Prostate gland (tissue), 2 donors: ENCODE measurements at regions of chr15 and their contacts with region 1.

Region 1: DNA sequence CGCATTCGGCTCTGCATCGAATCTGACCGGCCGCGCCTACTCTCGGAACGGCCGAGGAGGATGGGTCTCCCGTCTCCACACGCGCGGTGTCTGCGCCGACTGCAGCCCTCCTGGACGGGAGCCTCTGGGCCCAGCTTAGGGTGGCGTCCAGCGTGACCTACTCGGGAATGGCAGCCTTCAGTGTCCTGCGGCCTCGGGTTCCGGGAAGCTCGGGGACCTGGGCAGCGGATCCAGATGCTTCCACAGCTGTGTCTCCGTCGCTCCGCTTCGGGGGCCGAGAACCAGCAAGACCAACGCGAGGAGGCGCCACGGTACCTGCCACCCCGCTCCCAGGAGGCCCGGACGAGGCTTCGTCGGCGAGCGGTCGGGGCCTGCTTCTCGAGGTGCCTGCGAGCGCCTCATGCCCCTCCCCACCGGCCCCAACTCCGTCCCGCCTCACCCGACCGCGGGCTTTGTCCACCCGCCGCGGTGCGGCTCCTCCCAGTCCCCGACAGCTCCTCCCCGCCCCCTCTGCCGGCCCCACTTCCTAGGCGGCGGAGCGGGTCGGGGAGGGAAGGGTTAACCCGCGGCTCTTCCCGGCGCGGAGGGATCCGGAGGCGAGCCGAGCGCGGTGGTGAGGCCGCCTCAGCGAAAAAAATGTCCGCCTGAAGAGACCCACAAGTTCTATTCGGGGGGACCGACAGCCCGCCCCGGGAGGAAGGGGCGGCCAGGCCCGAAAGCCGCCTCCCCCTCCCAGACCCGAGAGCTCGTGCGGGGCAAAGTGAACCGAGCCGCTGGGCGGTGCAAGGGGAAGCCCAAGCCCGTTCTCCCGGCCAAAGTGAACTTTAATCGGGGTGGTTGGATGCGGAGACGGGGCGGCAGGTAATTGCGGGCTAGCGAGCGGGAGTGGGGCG is at the start of gene TCF12:
- DNase-seq: peak; percentile 90
- H3K4me3 ChIP-seq: peak within 1 kb of the TSS; percentile 86 to 98
- H3K27ac ChIP-seq: peak within 1 kb of the TSS; percentile 92 to 96
- H3K4me1 ChIP-seq: peaks cover 6% of the 10 kb centered on the region
- H3K27me3 ChIP-seq: no peaks in the 10 kb centered on the region
- CTCF ChIP-seq: peak; percentile 30 to 62 (median 50)
- POLR2A ChIP-seq: peak; percentile 63
- total RNA-seq, gene TCF12: 95.4 to 123 TPM

Region 2: GRCh38 chr15:56672721-56673120 is 245.6 kb before region 1 on chr15:
- intact Hi-C with region 1: no loop called
- DNase-seq: no peak
- H3K4me3 ChIP-seq: no peak overlapping the region
- H3K27ac ChIP-seq: no peak overlapping the region
- H3K4me1 ChIP-seq: no peaks in the 10 kb centered on the region
- H3K27me3 ChIP-seq: no peaks in the 10 kb centered on the region
- CTCF ChIP-seq: no peak
- POLR2A ChIP-seq: no peak

Region 3: DNA sequence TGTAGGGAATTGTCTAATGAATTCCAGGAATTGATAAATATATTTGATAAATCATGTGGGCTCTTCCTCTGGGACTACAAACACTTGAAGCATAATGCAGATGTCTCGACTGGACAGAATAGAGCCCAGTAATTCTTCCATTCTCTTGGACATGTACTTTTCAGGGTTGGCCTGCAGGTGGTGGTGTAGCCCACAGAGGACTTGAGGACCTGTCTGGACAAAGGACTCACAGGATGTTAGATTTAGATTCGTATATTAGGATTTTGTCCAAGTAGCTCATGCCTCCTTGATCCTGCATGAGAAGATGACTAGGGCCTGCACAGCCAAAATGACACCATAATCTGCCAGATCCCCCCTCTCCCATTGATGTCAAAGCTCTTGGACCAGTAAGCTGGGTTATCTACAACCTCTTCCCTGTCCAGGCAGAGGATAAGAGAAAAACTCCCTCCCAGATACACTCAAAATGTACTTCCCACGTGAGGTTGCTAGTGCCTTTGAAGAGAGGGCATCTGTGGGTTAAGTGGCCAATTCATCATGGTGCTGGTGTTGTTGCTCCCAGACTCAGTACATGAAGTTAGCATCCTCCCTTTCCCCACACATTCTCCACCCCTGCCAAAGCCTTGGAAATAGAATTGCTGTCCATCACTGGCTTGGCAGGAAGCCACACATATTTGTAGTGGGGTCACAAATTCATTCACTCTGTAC is 96.4 kb before region 1 on chr15:
- intact Hi-C with region 1: loop called (anchors 5 kb)
- DNase-seq: peak; percentile 45
- H3K4me3 ChIP-seq: no peak overlapping the region
- H3K27ac ChIP-seq: no peak overlapping the region
- H3K4me1 ChIP-seq: no peaks in the 10 kb centered on the region
- H3K27me3 ChIP-seq: no peaks in the 10 kb centered on the region
- CTCF ChIP-seq: peak; percentile 19 to 80 (median 59)
- POLR2A ChIP-seq: no peak

Region 4: GRCh38 chr15:56886932-56887781 is 31.1 kb before region 1 on chr15:
- intact Hi-C with region 1: loop called (anchors 1 kb)
- DNase-seq: peak; percentile 93
- H3K4me3 ChIP-seq: peak overlapping the region; percentile 65 to 70
- H3K27ac ChIP-seq: peak overlapping the region; percentile 97 to 98
- H3K4me1 ChIP-seq: no peaks in the 10 kb centered on the region
- H3K27me3 ChIP-seq: no peaks in the 10 kb centered on the region
- CTCF ChIP-seq: peak in 2 of 4 experiments; percentile 14 to 28
- POLR2A ChIP-seq: peak; percentile 58

Region 5: GRCh38 chr15:56906771-56907170 is 11.5 kb before region 1 on chr15:
- intact Hi-C with region 1: no loop called
- DNase-seq: no peak
- H3K4me3 ChIP-seq: no peak overlapping the region
- H3K27ac ChIP-seq: no peak overlapping the region
- H3K4me1 ChIP-seq: no peaks in the 10 kb centered on the region
- H3K27me3 ChIP-seq: no peaks in the 10 kb centered on the region
- CTCF ChIP-seq: no peak
- POLR2A ChIP-seq: no peak

Region 6: DNA sequence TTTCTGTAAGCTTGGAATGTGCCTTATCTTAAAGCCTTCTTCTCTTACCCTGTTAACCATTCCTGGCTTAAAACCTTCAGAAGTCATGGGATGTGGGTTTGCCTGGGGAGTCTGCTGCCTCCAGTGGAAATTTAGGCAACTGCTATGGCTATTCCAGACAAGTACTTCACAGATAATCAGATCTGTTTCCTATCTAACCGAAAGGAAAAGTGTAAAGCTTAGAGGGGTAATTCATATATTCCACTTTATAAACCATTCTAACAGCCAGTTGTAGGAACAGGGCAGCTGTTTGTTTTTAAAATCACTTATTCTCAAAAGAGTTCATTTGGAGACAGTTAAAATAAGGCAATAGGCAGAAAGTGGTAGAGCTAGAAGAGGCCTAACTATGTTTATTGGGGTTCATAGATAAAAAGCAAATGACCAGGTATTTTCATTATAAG is 220.1 kb after region 1 on chr15:
- intact Hi-C with region 1: loop called (anchors 5 kb)
- DNase-seq: no peak
- H3K4me3 ChIP-seq: no peak overlapping the region
- H3K27ac ChIP-seq: no peak overlapping the region
- H3K4me1 ChIP-seq: no peaks in the 10 kb centered on the region
- H3K27me3 ChIP-seq: no peaks in the 10 kb centered on the region
- CTCF ChIP-seq: peak in 3 of 4 experiments; percentile 17 to 60 (median 59)
- POLR2A ChIP-seq: no peak

Region 7: DNA sequence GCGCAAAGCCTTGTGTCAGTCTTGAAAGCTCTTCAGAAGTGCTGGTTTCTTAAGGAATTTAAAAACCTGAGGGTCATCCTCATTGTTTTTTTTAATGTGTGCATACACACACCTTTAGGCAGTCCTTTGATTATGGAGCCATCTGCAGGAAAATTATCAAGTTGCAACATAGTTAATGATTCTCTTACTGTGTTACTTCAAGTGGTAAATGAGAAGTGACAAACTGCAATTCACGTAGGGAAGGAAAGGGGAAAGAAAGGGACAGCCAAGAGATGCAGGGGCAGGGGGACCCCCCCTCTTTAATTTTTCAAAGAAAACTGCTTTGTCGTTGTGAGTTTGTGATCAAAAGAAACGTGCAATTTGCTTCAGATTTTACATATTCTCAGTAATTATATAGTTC is 295.6 kb after region 1 on chr15:
- intact Hi-C with region 1: loop called (anchors 5 kb)
- DNase-seq: peak; percentile 17
- H3K4me3 ChIP-seq: no peak overlapping the region
- H3K27ac ChIP-seq: no peak overlapping the region
- H3K4me1 ChIP-seq: no peaks in the 10 kb centered on the region
- H3K27me3 ChIP-seq: no peaks in the 10 kb centered on the region
- CTCF ChIP-seq: peak; percentile 19 to 67 (median 52)
- POLR2A ChIP-seq: no peak

Region 8: DNA sequence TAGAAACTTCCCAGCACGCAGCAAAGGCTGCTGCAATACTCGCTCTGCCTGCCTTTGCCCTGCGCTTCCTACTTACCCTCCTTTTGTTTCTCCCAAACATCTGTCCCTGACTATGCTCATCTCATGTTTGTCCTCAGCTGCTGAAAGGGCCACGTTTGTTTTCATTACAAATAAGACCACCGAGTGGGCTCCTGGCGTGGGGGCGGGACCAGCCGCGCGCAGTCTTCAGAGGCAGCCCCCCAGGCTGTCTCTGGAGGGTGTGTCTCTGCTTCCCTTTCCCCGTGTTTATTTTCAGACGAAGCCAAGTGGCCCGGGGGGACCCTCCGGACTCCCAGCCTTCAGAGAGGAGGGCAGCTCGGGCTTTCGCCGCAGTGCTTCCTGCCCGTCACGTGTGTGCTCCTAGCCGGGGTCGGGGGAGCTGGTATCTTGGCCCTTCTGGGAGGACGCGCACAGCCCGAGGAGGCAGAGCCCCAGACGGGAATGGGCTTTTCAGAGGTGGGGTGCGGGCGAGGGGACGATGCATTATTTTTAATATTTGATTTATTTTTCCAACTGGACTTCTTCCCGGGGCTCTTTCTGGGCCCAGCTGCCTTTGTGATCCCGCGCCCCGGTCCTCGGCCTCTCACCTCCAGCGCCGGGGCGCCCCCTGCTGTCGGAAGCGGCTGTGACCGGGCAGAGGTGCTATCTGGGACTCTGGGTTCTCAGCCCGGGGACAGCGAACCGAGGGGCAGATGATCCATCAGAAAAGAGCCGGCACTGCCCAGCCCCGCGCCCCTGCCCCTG is 388.1 kb after region 1 on chr15:
- intact Hi-C with region 1: loop called (anchors 5 kb)
- DNase-seq: peak; percentile 78
- H3K4me3 ChIP-seq: peak overlapping the region; percentile 30 to 34
- H3K27ac ChIP-seq: peak overlapping the region; percentile 65 to 79
- H3K4me1 ChIP-seq: peaks cover 10% of the 10 kb centered on the region
- H3K27me3 ChIP-seq: no peaks in the 10 kb centered on the region
- CTCF ChIP-seq: peak; percentile 63 to 83 (median 74)
- POLR2A ChIP-seq: no peak